A549 (cell line): ENCODE measurements at regions of chr12 and their contacts with region 1.

Region 1: GRCh38 chr12:98397316-98398105 is 117.9 kb upstream of the TMPO start:
- DNase-seq: peak; percentile 83 to 89
- ATAC-seq: peak; percentile 88 to 92
- H3K4me3 ChIP-seq: 0 out of 3 replicates have a peak overlapping the region, but pooled peaks have one; percentile 7
- H3K27ac ChIP-seq: peak overlapping the region; percentile 48 to 89
- H3K4me1 ChIP-seq: peaks cover 39% of the 10 kb centered on the region
- CTCF ChIP-seq: peak; percentile 95
- EP300 ChIP-seq: no peak
- POLR2A ChIP-seq: no peak
- RAD21 ChIP-seq: peak; percentile 94 to 95

Region 2: GRCh38 chr12:97148941-97149559 is 1248.5 kb before region 1 on chr12:
- CTCF ChIA-PET with region 1: interaction called, 12 read pairs
- POLR2A ChIA-PET with region 1: no interaction called
- DNase-seq: peak; percentile 24 to 57
- ATAC-seq: peak; percentile 96 to 100
- H3K4me3 ChIP-seq: no peak overlapping the region
- H3K27ac ChIP-seq: no peak overlapping the region
- H3K4me1 ChIP-seq: no peaks in the 10 kb centered on the region
- CTCF ChIP-seq: peak; percentile 56
- EP300 ChIP-seq: no peak
- POLR2A ChIP-seq: no peak
- RAD21 ChIP-seq: peak; percentile 41 to 65; a peak in 3 of 5 replicates

Region 3: DNA sequence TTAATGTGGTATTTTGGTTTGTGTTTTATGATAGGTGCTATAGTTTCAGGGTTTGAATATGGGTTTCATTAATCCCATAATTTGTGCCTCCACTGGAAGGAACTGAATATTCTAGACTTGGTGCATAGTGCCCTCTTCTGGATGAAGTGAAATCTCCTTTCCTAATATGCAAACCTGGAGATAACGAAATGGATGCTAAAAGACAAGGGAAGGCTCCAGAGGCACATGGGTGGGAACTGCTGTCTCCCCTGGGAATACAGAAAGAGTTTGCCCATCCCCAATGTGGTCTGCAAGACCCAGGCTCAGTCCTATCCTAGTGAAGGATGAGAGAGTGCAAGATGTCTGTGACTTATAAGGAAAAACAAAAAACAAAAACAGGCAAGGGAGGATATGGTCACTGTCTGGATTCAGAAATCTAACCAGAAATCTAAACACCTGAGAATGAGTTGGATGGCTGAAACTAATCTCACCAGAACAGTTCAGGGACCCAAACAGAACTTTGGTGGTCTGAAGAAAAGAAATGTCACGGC is 24.4 kb before region 1 on chr12:
- CTCF ChIA-PET with region 1: interaction called, 10 read pairs
- POLR2A ChIA-PET with region 1: no interaction called
- DNase-seq: peak; percentile 38 to 61
- ATAC-seq: peak; percentile 88 to 92
- H3K4me3 ChIP-seq: no peak overlapping the region
- H3K27ac ChIP-seq: no peak overlapping the region
- H3K4me1 ChIP-seq: no peaks in the 10 kb centered on the region
- CTCF ChIP-seq: peak; percentile 83
- EP300 ChIP-seq: no peak
- POLR2A ChIP-seq: no peak
- RAD21 ChIP-seq: peak; percentile 90 to 94

Region 4: DNA sequence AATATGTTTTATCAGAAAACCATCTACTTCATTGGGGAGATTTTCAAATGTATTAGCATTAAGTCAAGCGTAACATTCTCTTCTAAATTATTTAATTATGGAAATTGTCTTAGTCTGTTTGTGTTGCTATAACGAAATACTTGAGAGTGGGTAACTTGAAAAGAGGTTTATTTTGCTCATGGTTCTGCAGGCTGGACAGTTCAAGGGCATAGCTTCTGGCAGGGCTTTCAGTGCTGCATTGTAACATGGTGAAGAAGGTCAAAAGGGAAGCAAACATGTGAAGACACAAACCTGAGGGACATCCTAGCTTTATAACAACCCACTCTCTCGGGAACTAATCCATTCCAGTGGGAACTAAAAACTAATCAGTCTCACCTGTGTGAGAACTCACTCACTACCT is 33.6 kb after region 1 on chr12:
- CTCF ChIA-PET with region 1: no interaction called
- POLR2A ChIA-PET with region 1: no interaction called
- DNase-seq: no peak
- ATAC-seq: no peak
- H3K4me3 ChIP-seq: no peak overlapping the region
- H3K27ac ChIP-seq: no peak overlapping the region
- H3K4me1 ChIP-seq: no peaks in the 10 kb centered on the region
- CTCF ChIP-seq: no peak
- EP300 ChIP-seq: no peak
- POLR2A ChIP-seq: no peak
- RAD21 ChIP-seq: no peak